MCF 10A (cell line): ENCODE measurements at regions of chr22 and their contacts with region 1.

Region 1: GRCh38 chr22:39343259-39344048 is 6.3 kb upstream of the SYNGR1 start:
- DNase-seq: peak; percentile 68
- H3K4me3 Mint-ChIP-seq: no peak overlapping the region
- H3K27ac Mint-ChIP-seq: no peak overlapping the region
- H3K4me1 Mint-ChIP-seq: peaks cover 4% of the 10 kb centered on the region
- H3K27me3 Mint-ChIP-seq: peaks cover 26% of the 10 kb centered on the region
- CTCF ChIP-seq: peak; percentile 64

Region 2: DNA sequence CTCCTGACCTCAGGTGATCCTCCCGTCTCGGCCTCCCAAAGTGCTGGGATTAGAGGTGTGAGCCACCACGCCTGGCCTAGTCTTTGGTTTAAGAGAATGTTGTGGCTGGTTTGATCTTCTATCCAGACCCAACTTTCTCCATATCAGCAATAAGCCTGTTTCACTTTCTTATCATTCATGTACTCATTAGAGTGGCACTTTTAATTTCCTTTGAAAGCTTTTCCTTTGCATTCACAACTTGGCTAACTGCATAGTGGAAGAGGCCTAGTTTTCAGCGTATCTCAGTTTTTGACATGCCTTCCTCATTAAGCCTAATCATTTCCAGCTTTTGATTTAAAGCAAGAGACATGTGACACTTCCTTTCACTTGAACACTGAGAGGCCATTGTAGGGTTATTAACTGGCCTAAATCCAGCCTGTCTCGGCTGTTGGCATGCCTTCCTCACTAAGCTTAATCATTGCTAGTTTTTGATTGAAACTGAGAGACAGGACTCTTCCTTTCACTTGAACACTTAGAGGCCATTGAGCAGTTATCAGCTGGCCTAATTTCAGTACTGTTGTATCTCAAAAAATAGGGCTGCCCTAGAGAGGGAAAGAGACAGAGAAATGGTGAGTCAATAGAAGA is 10.9 kb before region 1 on chr22:
- CTCF ChIA-PET with region 1: interaction called, 10 read pairs
- POLR2A ChIA-PET with region 1: no interaction called
- intact Hi-C with region 1: no loop called
- DNase-seq: no peak
- H3K4me3 Mint-ChIP-seq: no peak overlapping the region
- H3K27ac Mint-ChIP-seq: no peak overlapping the region
- H3K4me1 Mint-ChIP-seq: no peaks in the 10 kb centered on the region
- H3K27me3 Mint-ChIP-seq: no peaks in the 10 kb centered on the region
- CTCF ChIP-seq: no peak